Natural killer cell (primary cell): ENCODE measurements at regions of chr11 and their contacts with region 1.

Region 1: GRCh38 chr11:105000797-105001196 is 22.2 kb downstream of the CASP5 start:
- DNase-seq: peak; percentile 40 to 77
- ATAC-seq: peak; percentile 83 to 92 (median 89)
- H3K4me3 ChIP-seq: no peak overlapping the region
- H3K4me3 Mint-ChIP-seq: no peak overlapping the region
- H3K27ac ChIP-seq: no peak overlapping the region
- H3K27ac Mint-ChIP-seq: no peak overlapping the region
- H3K4me1 ChIP-seq: no peaks in the 10 kb centered on the region
- H3K4me1 Mint-ChIP-seq: peaks cover 6 to 7% of the 10 kb centered on the region in 2 donors
- H3K27me3 ChIP-seq: no peaks in the 10 kb centered on the region
- H3K27me3 Mint-ChIP-seq: no peaks in the 10 kb centered on the region
- CTCF ChIP-seq: peak; percentile 90

Region 2: DNA sequence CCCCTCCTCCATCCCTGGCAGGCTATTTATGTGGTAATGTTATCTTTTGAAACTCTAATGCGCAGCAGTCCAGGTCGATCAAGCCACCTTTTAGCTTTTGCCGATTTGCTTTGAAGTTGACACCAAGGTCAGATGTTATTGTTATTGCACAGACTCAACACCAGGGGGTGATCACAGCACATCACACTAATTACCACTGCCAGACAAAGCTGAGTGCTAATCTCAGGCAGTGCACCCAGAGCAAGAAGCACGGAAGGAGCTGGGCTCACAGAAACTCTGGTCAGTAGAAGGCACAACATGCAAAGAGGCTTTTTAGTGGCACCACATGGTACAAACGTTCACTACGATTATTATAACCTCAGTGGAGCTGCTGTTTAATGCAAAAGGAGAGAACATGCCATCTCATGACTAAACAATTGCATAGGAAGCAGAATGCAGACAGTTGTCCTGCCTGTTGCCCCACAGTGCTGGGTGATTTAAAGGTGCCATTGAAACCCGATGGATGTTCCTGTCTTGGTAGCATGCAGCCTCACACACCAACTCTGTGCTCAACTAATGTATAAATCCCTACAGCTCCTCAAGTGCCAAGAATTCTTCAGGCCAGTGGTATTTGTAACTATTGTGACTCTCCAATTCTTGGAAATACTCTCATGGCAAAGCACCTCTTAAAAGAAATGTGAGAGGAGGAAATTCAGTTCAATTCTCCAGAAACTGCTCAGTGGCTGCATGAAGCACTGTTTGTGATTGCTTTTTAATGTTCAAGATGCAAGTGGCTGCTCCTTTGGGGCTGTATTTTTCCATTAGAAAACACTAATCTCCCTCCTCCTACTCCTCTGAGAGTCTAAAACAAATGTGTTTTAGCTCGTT is 1318.2 kb before region 1 on chr11:
- intact Hi-C with region 1: loop called (anchors 5 kb)
- DNase-seq: peak; percentile 37 to 73
- ATAC-seq: peak; percentile 89 to 100 (median 99)
- H3K4me3 ChIP-seq: no peak overlapping the region
- H3K4me3 Mint-ChIP-seq: peak overlapping the region; percentile 29
- H3K27ac ChIP-seq: no peak overlapping the region
- H3K27ac Mint-ChIP-seq: peak overlapping the region in 1 of 2 donors; percentile 56
- H3K4me1 ChIP-seq: peaks cover 3% of the 10 kb centered on the region
- H3K4me1 Mint-ChIP-seq: peaks cover 7% of the 10 kb centered on the region in 2 donors
- H3K27me3 ChIP-seq: no peaks in the 10 kb centered on the region
- H3K27me3 Mint-ChIP-seq: peaks cover 2 to 7% of the 10 kb centered on the region in 2 donors
- CTCF ChIP-seq: peak; percentile 68

Region 3: DNA sequence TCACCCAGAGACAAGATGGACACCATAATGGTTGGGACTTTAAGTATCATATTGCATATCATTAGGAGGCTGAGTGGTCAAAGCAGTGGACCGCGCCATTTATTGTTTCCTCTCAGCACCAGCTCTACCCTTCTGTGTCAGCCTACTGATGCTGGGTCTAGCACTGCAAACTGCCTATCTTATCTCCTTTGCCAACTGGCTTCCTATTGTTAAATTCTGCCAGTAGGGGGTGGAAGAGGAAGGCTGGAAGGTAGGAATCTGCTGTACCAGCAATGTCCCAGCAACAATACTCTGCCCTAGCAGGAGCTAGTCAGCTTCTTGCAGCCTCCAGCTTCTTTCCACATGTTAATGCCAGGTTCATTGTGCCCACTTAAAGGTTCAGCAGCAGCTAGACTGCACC is 469.7 kb before region 1 on chr11:
- intact Hi-C with region 1: loop called (anchors 10 kb)
- DNase-seq: peak in 1 of 2 donors; percentile 48
- ATAC-seq: peak in 2 of 3 donors; percentile 29 to 40
- H3K4me3 ChIP-seq: no peak overlapping the region
- H3K4me3 Mint-ChIP-seq: no peak overlapping the region
- H3K27ac ChIP-seq: no peak overlapping the region
- H3K27ac Mint-ChIP-seq: no peak overlapping the region
- H3K4me1 ChIP-seq: no peaks in the 10 kb centered on the region
- H3K4me1 Mint-ChIP-seq: no peaks in the 10 kb centered on the region
- H3K27me3 ChIP-seq: no peaks in the 10 kb centered on the region
- H3K27me3 Mint-ChIP-seq: peaks cover 0 to 9% of the 10 kb centered on the region in 2 donors
- CTCF ChIP-seq: peak; percentile 9

Region 4: GRCh38 chr11:104609311-104610085 is 391.3 kb before region 1 on chr11:
- intact Hi-C with region 1: loop called (anchors 1 kb)
- DNase-seq: peak in 1 of 2 donors; percentile 75
- ATAC-seq: peak; percentile 85 to 94 (median 86)
- H3K4me3 ChIP-seq: no peak overlapping the region
- H3K4me3 Mint-ChIP-seq: no peak overlapping the region
- H3K27ac ChIP-seq: no peak overlapping the region
- H3K27ac Mint-ChIP-seq: peak overlapping the region in 1 of 2 donors; percentile 29
- H3K4me1 ChIP-seq: peaks cover 3% of the 10 kb centered on the region
- H3K4me1 Mint-ChIP-seq: peaks cover 7% of the 10 kb centered on the region in 2 donors
- H3K27me3 ChIP-seq: no peaks in the 10 kb centered on the region
- H3K27me3 Mint-ChIP-seq: no peaks in the 10 kb centered on the region
- CTCF ChIP-seq: peak; percentile 82

Region 5: GRCh38 chr11:104823638-104824037 is 177.2 kb before region 1 on chr11:
- intact Hi-C with region 1: loop called (anchors 10 kb)
- DNase-seq: peak in 1 of 2 donors; percentile 26
- ATAC-seq: no peak
- H3K4me3 ChIP-seq: no peak overlapping the region
- H3K4me3 Mint-ChIP-seq: no peak overlapping the region
- H3K27ac ChIP-seq: no peak overlapping the region
- H3K27ac Mint-ChIP-seq: no peak overlapping the region
- H3K4me1 ChIP-seq: no peaks in the 10 kb centered on the region
- H3K4me1 Mint-ChIP-seq: peaks cover 0 to 10% of the 10 kb centered on the region in 2 donors
- H3K27me3 ChIP-seq: no peaks in the 10 kb centered on the region
- H3K27me3 Mint-ChIP-seq: no peaks in the 10 kb centered on the region
- CTCF ChIP-seq: peak; percentile 18

Region 6: GRCh38 chr11:104946907-104947306 is 53.9 kb before region 1 on chr11:
- intact Hi-C with region 1: loop called (anchors 10 kb)
- DNase-seq: peak in 1 of 2 donors; percentile 77
- ATAC-seq: peak; percentile 67 to 88 (median 81)
- H3K4me3 ChIP-seq: no peak overlapping the region
- H3K4me3 Mint-ChIP-seq: no peak overlapping the region
- H3K27ac ChIP-seq: no peak overlapping the region
- H3K27ac Mint-ChIP-seq: peak overlapping the region; percentile 7 to 19
- H3K4me1 ChIP-seq: no peaks in the 10 kb centered on the region
- H3K4me1 Mint-ChIP-seq: peaks cover 34 to 36% of the 10 kb centered on the region in 2 donors
- H3K27me3 ChIP-seq: no peaks in the 10 kb centered on the region
- H3K27me3 Mint-ChIP-seq: no peaks in the 10 kb centered on the region
- CTCF ChIP-seq: peak; percentile 71

Region 7: GRCh38 chr11:105023003-105023402 is 22.2 kb after region 1 on chr11 and contains the start of gene CASP5:
- intact Hi-C with region 1: no loop called
- DNase-seq: no peak
- ATAC-seq: no peak
- H3K4me3 ChIP-seq: no peak within 1 kb of the TSS
- H3K4me3 Mint-ChIP-seq: no peak within 1 kb of the TSS
- H3K27ac ChIP-seq: no peak within 1 kb of the TSS
- H3K27ac Mint-ChIP-seq: peak within 1 kb of the TSS in 1 of 2 donors; percentile 13
- H3K4me1 ChIP-seq: no peaks in the 10 kb centered on the region
- H3K4me1 Mint-ChIP-seq: peaks cover 6 to 25% of the 10 kb centered on the region in 2 donors
- H3K27me3 ChIP-seq: no peaks in the 10 kb centered on the region
- H3K27me3 Mint-ChIP-seq: no peaks in the 10 kb centered on the region
- CTCF ChIP-seq: no peak
- total RNA-seq, gene CASP5: 1.1 to 1.6 (median 1.3) TPM

Region 8: DNA sequence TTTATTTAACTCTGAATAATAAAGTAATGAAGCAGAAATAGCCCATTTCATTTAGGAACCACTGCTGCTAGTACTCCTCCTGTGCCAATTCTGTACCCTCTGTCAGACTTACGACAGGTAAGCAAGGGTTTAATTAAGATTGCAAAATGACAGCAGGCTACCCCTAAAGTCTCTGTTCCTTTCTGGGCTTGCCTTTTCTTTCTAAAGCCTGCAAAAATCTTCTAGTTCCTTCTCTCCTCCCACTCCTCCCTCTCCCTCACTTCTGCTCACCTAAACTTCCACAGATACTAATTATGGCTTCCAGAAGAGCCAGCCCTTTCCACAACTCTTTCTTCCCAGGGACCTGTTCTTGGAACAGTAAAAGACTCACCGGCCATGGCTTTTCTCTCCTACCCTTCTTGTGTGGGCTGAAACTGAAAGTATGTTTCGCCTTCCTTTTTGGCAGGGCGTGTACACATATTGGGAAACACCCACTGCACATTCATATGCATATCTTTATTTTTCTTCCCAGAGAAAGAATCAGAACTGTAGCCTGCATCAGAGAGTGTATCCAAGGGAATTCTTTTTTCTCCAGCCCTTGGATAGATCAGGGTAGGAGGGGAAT is 44.2 kb after region 1 on chr11 and contains the start of gene CARD16:
- intact Hi-C with region 1: no loop called
- DNase-seq: peak in 1 of 2 donors; percentile 78
- ATAC-seq: peak; percentile 86 to 93 (median 87)
- H3K4me3 ChIP-seq: peak within 1 kb of the TSS; percentile 48
- H3K4me3 Mint-ChIP-seq: peak within 1 kb of the TSS; percentile 94
- H3K27ac ChIP-seq: peak within 1 kb of the TSS; percentile 71
- H3K27ac Mint-ChIP-seq: peak within 1 kb of the TSS; percentile 90 to 92
- H3K4me1 ChIP-seq: peaks cover 12% of the 10 kb centered on the region
- H3K4me1 Mint-ChIP-seq: peaks cover 49 to 65% of the 10 kb centered on the region in 2 donors
- H3K27me3 ChIP-seq: no peaks in the 10 kb centered on the region
- H3K27me3 Mint-ChIP-seq: no peaks in the 10 kb centered on the region
- CTCF ChIP-seq: no peak
- total RNA-seq, gene CARD16: 54.7 to 113 (median 110) TPM